ENCODE measurements at regions of chr5 and their contacts with region 1.

Region 1: DNA sequence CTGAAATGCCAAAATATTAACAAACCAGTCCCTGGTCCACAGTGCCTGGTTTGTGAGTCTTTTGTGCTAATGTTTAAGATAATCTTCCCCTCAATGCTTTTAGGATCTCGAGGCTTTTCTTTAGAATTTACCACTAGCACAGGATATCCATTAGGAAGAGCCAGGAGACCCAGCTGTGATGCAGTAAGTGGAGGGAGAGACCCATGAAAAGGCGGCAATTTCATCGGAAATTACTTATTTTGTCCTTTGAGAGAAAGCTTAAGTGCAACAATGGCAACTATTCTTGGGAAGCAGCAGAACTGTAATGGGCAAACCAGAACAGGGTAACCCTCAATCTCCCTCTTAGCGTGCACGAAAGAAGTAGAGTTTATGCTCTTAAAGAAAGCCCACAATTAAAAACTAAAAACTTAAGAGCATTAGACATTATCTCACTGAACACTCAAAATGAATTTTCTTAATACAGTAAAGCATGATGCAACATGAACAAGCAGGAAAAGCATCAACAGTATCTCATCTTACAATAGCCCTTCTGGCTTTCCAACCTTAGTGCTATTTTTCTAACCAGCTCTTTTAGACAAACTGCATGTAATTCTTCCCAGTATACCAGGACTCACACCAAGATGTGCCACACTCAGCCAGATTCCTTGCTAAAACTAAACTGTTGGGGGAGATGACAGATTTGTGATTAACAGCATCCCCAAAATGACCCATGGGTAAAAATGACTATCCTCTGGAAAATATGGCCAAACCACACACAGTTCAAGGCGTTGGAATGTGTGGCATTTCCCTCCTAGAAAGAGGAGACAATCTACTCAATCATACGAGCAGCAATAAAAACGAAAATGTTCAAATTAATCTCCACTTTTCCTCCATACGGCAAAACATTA is 36.4 kb downstream of the PWWP2A start:
- DNase-seq: peak in 1 of 2 experiments; percentile 42
- ATAC-seq: peak; percentile 33 to 78; a peak in 5 of 6 replicates
- H3K4me3 ChIP-seq: no peak overlapping the region
- H3K27ac ChIP-seq: peak overlapping the region; percentile 46 to 77
- H3K4me1 ChIP-seq: peaks cover 28% of the 10 kb centered on the region
- CTCF ChIP-seq: no peak
- EP300 ChIP-seq: no peak
- POLR2A ChIP-seq: no peak
- RAD21 ChIP-seq: no peak

Region 2: GRCh38 chr5:159732220-159732619 is 350.6 kb before region 1 on chr5:
- CTCF ChIA-PET with region 1: no interaction called
- POLR2A ChIA-PET with region 1: no interaction called
- DNase-seq: no peak
- ATAC-seq: no peak
- H3K4me3 ChIP-seq: no peak overlapping the region
- H3K27ac ChIP-seq: no peak overlapping the region
- H3K4me1 ChIP-seq: peaks cover 21% of the 10 kb centered on the region
- CTCF ChIP-seq: no peak
- EP300 ChIP-seq: no peak
- POLR2A ChIP-seq: no peak
- RAD21 ChIP-seq: no peak

Region 3: DNA sequence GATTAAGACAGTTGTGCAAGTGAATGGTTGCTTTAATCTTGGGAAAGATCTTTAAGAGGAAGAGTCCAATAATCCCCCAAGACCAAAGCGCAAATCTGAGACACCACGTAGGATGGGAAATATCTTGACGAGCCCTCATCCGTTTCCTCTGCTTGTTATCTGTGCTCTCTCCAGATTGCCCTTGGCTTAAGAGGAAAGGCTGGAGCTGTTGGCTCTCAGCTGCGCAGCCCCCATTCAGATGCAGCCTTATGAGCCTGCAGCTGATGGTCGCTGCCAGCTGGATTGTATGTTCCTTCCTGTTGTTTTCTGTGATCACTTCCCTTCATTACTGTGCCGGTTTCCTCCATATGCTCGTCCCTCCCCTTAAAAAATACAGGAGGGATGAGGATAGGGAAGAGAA is 11.3 kb before region 1 on chr5:
- CTCF ChIA-PET with region 1: interaction called, 24 read pairs
- POLR2A ChIA-PET with region 1: interaction called, 3 read pairs
- DNase-seq: no peak
- ATAC-seq: no peak
- H3K4me3 ChIP-seq: no peak overlapping the region
- H3K27ac ChIP-seq: no peak overlapping the region
- H3K4me1 ChIP-seq: no peaks in the 10 kb centered on the region
- CTCF ChIP-seq: no peak
- EP300 ChIP-seq: no peak
- POLR2A ChIP-seq: no peak
- RAD21 ChIP-seq: no peak

Region 4: DNA sequence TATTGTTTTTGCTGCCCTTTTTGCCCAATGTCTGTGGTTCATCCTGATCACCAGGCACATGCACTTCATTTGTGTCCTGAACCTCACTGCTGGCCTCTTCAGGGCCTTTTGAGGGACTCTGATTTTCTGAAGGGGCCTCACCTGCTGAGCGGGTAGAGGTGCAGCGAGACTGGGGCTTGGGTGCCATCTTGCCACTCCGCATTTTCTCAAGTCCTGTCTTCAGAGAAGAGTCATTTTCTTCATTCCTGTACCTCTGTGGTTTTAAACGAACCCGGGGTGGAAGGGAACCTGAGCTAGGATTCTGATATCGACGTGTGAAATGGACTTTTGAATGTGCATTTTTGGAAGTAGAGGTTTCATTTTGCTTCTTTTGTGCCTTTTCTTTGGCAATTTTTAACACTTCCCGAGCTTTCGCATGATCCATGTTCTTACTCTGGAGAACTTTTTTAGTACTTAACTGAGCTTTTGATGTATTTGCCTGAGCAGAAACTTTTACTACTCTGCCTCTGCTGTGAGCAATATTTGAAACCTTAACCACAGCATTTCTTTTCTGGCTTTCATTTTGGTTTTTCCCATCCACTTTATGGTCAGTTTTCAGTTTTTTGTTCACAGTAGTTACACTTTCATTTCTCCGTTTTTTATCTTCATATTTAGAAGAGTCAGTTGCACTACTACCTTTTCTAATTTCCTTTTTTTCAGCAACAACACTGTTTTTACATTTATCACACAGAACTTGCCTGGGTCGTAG is 10.3 kb after region 1 on chr5:
- CTCF ChIA-PET with region 1: interaction called, 11 read pairs
- POLR2A ChIA-PET with region 1: interaction called, 5 read pairs
- DNase-seq: no peak
- ATAC-seq: no peak
- H3K4me3 ChIP-seq: no peak overlapping the region
- H3K27ac ChIP-seq: no peak overlapping the region
- H3K4me1 ChIP-seq: no peaks in the 10 kb centered on the region
- CTCF ChIP-seq: no peak
- EP300 ChIP-seq: no peak
- POLR2A ChIP-seq: no peak
- RAD21 ChIP-seq: no peak

Region 5: DNA sequence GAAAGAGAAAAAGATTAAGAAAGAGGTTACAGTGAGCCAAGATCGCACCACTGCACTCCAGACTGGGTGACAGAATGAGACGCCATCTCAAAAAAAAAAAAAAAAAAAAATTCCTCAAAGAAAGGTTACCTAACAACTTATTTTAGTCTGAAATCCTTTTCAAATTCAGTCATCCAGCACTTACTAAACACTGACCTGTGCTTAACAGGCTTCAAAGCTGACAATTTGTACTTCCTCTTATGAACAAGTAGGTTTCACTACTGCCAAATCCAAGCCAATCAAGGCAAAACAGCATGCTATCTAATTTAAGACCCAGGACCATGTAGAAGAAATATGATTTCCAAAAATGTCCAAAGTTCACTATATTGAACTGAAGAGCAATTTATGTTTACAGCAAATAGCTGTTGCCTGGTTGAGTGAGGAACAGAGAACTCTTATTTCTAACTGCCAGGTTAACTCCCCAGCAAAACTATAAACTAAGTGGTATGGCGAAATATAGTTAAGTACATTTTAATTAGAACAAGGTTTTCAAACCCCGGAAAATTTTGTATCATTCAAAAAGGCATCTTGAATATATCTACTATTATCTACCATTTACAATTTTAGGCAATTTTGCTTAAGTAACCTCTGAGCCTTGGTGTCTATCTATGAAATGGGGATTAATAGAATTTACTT is 23.0 kb after region 1 on chr5:
- CTCF ChIA-PET with region 1: interaction called, 11 read pairs
- POLR2A ChIA-PET with region 1: no interaction called
- DNase-seq: no peak
- ATAC-seq: no peak
- H3K4me3 ChIP-seq: no peak overlapping the region
- H3K27ac ChIP-seq: no peak overlapping the region
- H3K4me1 ChIP-seq: 0 out of 3 replicates have a peak, but pooled peaks cover 3% of the 10 kb centered on the region
- CTCF ChIP-seq: no peak
- EP300 ChIP-seq: no peak
- POLR2A ChIP-seq: no peak
- RAD21 ChIP-seq: no peak

Region 6: DNA sequence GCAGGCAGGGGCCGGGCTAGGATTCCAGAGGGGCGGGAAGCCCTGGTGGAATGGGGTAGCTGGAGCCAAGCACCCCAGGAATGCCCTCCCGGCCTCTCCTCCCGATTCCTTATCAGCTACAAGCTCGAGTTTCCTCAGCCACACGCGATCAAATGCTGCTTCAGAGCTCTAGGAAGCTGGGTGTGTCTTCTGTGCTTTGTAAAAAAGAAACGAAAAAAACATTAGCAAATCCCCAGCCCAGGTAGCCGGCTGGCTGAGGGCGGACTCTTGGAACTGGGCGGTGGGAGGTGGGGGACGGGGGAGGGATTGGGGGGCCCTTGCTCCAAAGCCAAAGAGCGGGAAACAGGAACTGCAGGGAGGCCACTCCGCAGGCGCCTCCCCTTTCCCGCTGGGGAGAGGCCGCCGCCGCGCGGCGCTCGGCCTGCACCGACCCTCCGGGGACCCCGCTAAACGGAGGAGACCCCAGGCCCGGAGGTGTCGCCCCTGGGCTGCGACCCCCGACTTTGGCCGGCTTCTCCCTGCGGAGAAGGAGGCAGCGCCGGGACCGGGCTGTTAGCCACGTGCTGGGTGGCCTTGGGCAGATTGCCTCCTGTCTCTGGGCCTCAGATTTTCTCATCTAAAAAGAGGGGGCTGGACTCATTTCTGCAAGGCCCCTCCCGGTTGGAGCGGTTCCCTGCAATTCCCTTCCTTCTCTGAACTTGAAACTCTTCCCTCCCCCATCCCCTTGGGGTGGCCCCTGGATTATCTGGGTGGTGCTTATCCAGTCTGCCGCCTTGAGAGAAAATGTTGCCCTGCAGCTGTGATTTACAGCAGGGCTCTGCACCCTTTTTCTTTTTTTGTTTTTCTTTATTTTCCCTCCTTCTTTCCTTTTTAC is 105.5 kb after region 1 on chr5:
- CTCF ChIA-PET with region 1: no interaction called
- POLR2A ChIA-PET with region 1: no interaction called
- DNase-seq: peak; percentile 27 to 31
- ATAC-seq: peak; percentile 55 to 78; a peak in 5 of 6 replicates
- H3K4me3 ChIP-seq: peak overlapping the region; percentile 24; the same call in 1 of the 3 replicates
- H3K27ac ChIP-seq: peak overlapping the region; percentile 71 to 85
- H3K4me1 ChIP-seq: no peaks in the 10 kb centered on the region
- CTCF ChIP-seq: no peak
- EP300 ChIP-seq: no peak
- POLR2A ChIP-seq: no peak
- RAD21 ChIP-seq: no peak

Region 7: GRCh38 chr5:160390787-160391696 is 308.2 kb after region 1 on chr5:
- CTCF ChIA-PET with region 1: interaction called, 12 read pairs
- POLR2A ChIA-PET with region 1: no interaction called
- DNase-seq: peak in 1 of 2 experiments; percentile 32
- ATAC-seq: peak; percentile 47 to 69; a peak in 3 of 6 replicates
- H3K4me3 ChIP-seq: no peak overlapping the region
- H3K27ac ChIP-seq: no peak overlapping the region
- H3K4me1 ChIP-seq: no peaks in the 10 kb centered on the region
- CTCF ChIP-seq: peak; percentile 75
- EP300 ChIP-seq: no peak
- POLR2A ChIP-seq: no peak
- RAD21 ChIP-seq: peak; percentile 73 to 79